AG04450 (cell line): ENCODE measurements at regions of chr5 and their contacts with region 1.

Region 1: GRCh38 chr5:170183816-170184687 is 48.7 kb upstream of the C5orf58 start:
- DNase-seq: no peak
- H3K4me3 ChIP-seq: no peak overlapping the region
- H3K27ac ChIP-seq: no peak overlapping the region
- H3K27me3 ChIP-seq: no peaks in the 10 kb centered on the region
- CTCF ChIP-seq: peak; percentile 81

Region 2: GRCh38 chr5:170100066-170100943 is 83.7 kb before region 1 on chr5:
- CTCF ChIA-PET with region 1: interaction called, 97 read pairs
- POLR2A ChIA-PET with region 1: no interaction called
- DNase-seq: peak; percentile 61
- H3K4me3 ChIP-seq: no peak overlapping the region
- H3K27ac ChIP-seq: no peak overlapping the region
- H3K27me3 ChIP-seq: no peaks in the 10 kb centered on the region
- CTCF ChIP-seq: peak; percentile 70

Region 3: DNA sequence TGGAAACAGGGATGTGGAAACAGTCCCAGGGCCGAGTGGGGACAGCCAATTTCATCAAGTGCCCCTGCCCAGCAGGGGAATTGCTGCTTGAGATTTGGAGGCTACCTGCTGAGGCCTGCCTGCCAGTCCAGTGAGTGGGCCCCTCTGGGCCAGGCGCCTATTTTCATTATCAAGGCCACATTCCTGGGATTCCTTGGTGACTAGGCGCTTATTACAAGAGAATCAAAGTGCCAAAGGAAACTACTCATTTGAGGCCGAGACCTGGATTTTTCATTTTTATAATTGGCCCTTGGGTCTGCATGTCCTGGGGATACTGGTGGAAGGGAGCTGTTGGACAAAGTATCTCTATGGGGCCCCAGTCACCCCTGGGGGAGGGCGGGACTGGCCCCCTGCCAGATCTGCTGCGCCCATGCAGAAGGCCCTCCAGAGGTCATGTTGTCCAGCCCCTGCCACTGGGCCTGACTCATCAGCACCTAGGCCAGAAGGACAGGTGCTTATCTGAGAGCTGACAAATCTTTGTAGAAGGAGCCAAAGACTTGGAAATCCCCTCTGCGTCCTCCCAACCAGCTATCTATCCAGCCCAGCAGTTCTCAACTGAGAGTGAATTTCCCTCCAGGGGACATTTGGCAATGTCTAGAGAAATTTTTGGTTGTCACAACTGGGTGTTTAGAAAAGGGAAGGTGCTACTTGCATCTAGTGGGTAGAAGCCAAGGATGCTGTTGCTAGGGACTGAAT is 32.8 kb before region 1 on chr5:
- CTCF ChIA-PET with region 1: no interaction called
- POLR2A ChIA-PET with region 1: no interaction called
- DNase-seq: no peak
- H3K4me3 ChIP-seq: no peak overlapping the region
- H3K27ac ChIP-seq: no peak overlapping the region
- H3K27me3 ChIP-seq: no peaks in the 10 kb centered on the region
- CTCF ChIP-seq: no peak

Region 4: DNA sequence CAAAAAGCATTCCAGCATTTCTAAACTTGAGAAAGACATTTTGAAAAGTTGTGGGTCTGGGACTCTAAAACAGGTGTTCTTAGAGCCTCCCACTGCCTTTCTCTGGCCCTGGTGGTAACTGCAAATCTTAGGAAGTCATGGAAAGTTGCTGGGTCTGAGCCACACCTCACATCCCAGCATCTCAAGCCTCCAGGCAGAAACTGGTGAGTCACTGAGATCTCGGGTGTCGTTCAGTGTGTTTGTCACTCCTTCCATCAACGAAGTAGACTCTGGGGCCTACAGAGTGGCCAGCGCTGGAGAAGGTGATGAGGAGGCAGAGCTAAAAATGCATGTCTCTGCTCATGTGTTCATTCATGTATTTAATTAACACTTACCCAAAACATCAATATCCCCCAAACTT is 10.8 kb before region 1 on chr5:
- CTCF ChIA-PET with region 1: interaction called, 36 read pairs
- POLR2A ChIA-PET with region 1: no interaction called
- DNase-seq: no peak
- H3K4me3 ChIP-seq: no peak overlapping the region
- H3K27ac ChIP-seq: no peak overlapping the region
- H3K27me3 ChIP-seq: peaks cover 4% of the 10 kb centered on the region
- CTCF ChIP-seq: no peak

Region 5: GRCh38 chr5:170195961-170196360 is 11.9 kb after region 1 on chr5:
- CTCF ChIA-PET with region 1: interaction called, 24 read pairs
- POLR2A ChIA-PET with region 1: no interaction called
- DNase-seq: no peak
- H3K4me3 ChIP-seq: no peak overlapping the region
- H3K27ac ChIP-seq: no peak overlapping the region
- H3K27me3 ChIP-seq: no peaks in the 10 kb centered on the region
- CTCF ChIP-seq: no peak

Region 6: DNA sequence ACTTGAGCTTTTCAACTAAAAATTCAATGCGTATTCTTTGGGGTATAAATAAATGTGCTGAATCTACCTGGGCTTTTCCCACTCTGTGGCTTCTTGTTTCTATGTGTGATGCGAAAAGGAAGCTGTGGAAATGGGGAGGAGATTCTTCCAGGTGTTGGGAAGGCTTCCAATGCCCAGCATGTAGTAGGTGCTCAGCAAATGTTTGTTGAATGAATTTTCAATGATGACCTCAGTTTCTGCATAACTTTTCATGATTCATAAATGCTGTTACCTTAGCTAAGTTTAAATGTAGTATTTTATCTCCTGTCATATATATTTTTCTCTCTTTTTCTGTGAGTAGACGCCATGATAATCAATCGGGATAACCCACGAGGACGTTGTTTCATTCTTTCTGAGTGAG is 230.7 kb after region 1 on chr5:
- CTCF ChIA-PET with region 1: no interaction called
- POLR2A ChIA-PET with region 1: no interaction called
- DNase-seq: no peak
- H3K4me3 ChIP-seq: no peak overlapping the region
- H3K27ac ChIP-seq: no peak overlapping the region
- H3K27me3 ChIP-seq: no peaks in the 10 kb centered on the region
- CTCF ChIP-seq: no peak